ENCODE measurements at regions of chr5 and their contacts with region 1.

Region 1: GRCh38 chr5:110865400-110866094 is 126.7 kb downstream of the SLC25A46 start:
- DNase-seq: peak; percentile 28
- ATAC-seq: peak; percentile 94
- H3K4me3 ChIP-seq: no peak overlapping the region
- H3K27ac ChIP-seq: no peak overlapping the region
- H3K4me1 ChIP-seq: no peaks in the 10 kb centered on the region
- H3K27me3 ChIP-seq: no peaks in the 10 kb centered on the region
- CTCF ChIP-seq: peak; percentile 69
- EP300 ChIP-seq: no peak
- POLR2A ChIP-seq: no peak
- RAD21 ChIP-seq: no peak

Region 2: GRCh38 chr5:110807169-110807568 is 58.4 kb before region 1 on chr5:
- CTCF ChIA-PET with region 1: no interaction called
- POLR2A ChIA-PET with region 1: no interaction called
- in situ Hi-C with region 1: no loop called
- intact Hi-C with region 1: no loop called
- DNase-seq: no peak
- ATAC-seq: no peak
- H3K4me3 ChIP-seq: no peak overlapping the region
- H3K27ac ChIP-seq: no peak overlapping the region
- H3K4me1 ChIP-seq: no peaks in the 10 kb centered on the region
- H3K27me3 ChIP-seq: no peaks in the 10 kb centered on the region
- CTCF ChIP-seq: no peak
- EP300 ChIP-seq: no peak
- POLR2A ChIP-seq: no peak
- RAD21 ChIP-seq: no peak

Region 3: DNA sequence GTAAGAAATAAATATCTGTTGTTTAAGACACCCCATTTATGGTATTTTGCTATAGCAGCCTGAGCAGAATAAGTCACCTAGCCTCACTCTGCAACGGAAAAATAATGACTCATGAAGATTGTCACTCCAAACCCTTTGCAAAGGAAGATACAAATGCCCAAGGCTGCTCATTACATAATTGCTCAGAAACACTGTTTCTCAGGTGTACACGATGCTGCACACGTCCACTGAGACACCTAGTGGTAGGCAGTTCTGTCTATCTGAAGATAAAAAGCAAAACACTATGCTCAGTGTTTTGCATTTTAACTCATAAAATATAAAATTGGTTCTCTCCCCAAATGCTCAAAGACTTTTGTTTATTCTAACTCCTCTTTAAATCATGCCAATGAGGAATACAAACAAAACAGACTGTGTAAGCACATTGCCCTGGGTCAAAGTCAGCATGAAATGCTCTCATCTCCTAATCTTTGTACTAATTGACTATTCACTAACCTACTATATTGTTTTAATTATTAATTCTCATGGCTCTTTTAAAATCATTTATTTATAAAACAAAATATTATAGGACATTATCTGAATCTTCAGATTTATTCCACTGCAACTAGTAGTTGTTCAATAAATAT is 198.3 kb after region 1 on chr5:
- CTCF ChIA-PET with region 1: no interaction called
- POLR2A ChIA-PET with region 1: no interaction called
- in situ Hi-C with region 1: no loop called
- intact Hi-C with region 1: loop called (anchors 10 kb)
- DNase-seq: peak; percentile 31
- ATAC-seq: peak; percentile 77
- H3K4me3 ChIP-seq: no peak overlapping the region
- H3K27ac ChIP-seq: no peak overlapping the region
- H3K4me1 ChIP-seq: no peaks in the 10 kb centered on the region
- H3K27me3 ChIP-seq: peaks cover 0 to 3% of the 10 kb centered on the region in 2 experiments; a peak in 2 of 5 replicates
- CTCF ChIP-seq: peak; percentile 64
- EP300 ChIP-seq: no peak
- POLR2A ChIP-seq: no peak
- RAD21 ChIP-seq: no peak

Region 4: DNA sequence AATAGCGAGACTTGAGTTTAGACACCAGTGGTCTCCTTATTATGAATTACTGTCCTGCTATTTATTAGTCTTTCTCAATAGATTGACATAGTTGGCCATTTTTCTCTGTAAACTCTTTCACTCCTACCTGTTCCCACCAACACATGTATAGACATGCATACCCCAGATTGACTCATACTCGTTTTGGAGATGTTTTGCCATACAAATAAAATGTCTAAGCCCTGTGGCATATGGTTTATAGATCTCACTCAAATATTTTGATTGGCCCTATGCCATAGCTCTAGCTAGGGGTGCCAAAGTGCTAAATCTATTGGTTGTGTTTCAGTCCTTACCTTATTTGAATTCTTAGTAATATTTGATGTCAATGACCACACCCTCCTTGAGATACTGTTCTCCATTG is 400.9 kb after region 1 on chr5:
- CTCF ChIA-PET with region 1: no interaction called
- POLR2A ChIA-PET with region 1: no interaction called
- in situ Hi-C with region 1: no loop called
- intact Hi-C with region 1: no loop called
- DNase-seq: no peak
- ATAC-seq: no peak
- H3K4me3 ChIP-seq: no peak overlapping the region
- H3K27ac ChIP-seq: no peak overlapping the region
- H3K4me1 ChIP-seq: no peaks in the 10 kb centered on the region
- H3K27me3 ChIP-seq: no peaks in the 10 kb centered on the region
- CTCF ChIP-seq: no peak
- EP300 ChIP-seq: no peak
- POLR2A ChIP-seq: no peak
- RAD21 ChIP-seq: no peak

Measured in HepG2 (cell line).